ENCODE measurements at regions of chr18 and their contacts with region 1.

Region 1: GRCh38 chr18:35756506-35757117 is 175.1 kb downstream of the GALNT1 start:
- DNase-seq: no peak
- H3K4me3 ChIP-seq: no peak overlapping the region
- H3K27ac ChIP-seq: no peak overlapping the region
- H3K4me1 ChIP-seq: no peaks in the 10 kb centered on the region
- H3K27me3 ChIP-seq: no peaks in the 10 kb centered on the region
- CTCF ChIP-seq: peak; percentile 43 to 74 (median 54)
- EP300 ChIP-seq: no peak
- POLR2A ChIP-seq: no peak

Region 2: DNA sequence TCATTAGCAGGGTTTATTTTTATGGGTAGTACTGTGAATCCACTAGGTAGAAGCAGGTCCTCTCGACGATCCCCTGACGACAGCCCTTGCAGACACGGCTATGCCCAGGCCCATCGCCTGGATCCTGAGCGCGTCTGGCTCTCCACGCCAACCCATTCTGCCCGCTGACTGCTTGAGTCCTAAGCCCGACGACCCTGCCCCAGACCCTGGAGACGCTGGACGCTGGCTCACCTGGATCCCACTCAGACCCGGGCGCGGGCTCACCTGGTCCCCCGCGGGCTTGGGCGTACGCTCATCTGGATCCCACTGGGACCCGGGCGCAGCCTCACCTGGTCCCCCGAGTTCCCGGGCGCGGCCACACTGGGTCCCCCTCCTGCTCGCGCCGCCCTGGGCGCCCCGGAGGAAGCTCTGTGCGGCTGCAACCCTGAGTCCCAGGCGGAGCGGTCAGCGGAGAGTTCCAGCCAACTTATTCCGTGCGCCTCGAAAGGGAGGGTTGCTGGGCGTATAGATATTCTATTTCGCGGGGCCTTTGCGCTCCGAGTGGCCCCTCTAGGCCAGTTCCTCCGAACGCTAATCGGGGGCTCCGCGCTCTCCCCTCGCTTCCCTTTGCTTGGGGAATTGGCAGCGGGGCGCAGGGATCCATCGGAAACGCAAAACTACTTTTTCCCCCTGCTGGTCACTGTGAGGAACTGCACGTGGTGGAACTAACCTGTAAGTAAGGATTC is 193.5 kb after region 1 on chr18:
- intact Hi-C with region 1: loop called (anchors 1 kb)
- DNase-seq: peak; percentile 73
- H3K4me3 ChIP-seq: peak overlapping the region; percentile 31 to 56 (median 48)
- H3K27ac ChIP-seq: peak overlapping the region in 2 of 4 donors; percentile 18 to 68
- H3K4me1 ChIP-seq: peaks cover 0 to 8% (median 5%) of the 10 kb centered on the region in 4 donors
- H3K27me3 ChIP-seq: peaks cover 0 to 3% (median 0%) of the 10 kb centered on the region in 3 donors
- CTCF ChIP-seq: peak; percentile 60 to 95 (median 84)
- EP300 ChIP-seq: no peak
- POLR2A ChIP-seq: no peak

Region 3: DNA sequence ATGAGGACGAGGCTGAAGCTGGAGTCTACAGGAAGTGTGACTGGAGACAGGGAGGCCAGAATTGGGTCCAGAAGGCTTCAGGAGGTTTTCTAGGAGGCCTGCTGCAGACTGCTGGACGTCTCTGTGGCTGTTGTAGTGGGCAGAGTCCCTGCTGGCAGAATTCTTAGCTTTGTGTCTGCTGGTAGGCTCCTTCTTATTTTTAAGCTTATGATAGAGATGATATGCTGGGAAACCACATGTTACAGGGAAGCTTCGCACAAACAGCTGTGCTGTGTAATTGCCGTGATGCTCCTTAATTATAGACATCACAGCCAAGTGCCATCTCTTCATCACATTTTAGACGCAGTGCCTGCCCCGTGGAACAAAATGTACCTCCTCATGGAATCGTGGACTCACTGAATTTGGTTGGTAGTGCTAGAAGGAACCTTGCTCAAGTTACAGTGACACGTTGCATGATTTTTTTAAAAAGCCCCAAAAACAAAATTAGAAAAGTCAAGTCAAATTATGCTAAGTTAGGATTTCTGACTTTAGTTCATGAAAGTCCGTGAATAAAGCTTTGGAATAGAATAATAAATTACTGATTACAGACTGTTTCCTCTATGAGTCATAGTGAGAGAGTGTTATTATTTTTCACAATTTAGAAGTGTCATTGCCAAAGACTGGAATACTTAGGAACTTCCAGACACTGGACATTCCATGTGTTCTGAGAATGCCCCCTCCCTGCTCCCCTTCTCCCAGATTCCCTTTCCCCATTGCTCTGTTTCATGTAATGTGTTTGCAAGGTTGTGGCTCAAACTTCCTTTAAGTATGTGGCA is 685.0 kb after region 1 on chr18:
- intact Hi-C with region 1: no loop called
- DNase-seq: no peak
- H3K4me3 ChIP-seq: no peak overlapping the region
- H3K27ac ChIP-seq: peak overlapping the region; percentile 38 to 79 (median 66)
- H3K4me1 ChIP-seq: peaks cover 0 to 35% (median 17%) of the 10 kb centered on the region in 4 donors
- H3K27me3 ChIP-seq: no peaks in the 10 kb centered on the region
- CTCF ChIP-seq: no peak
- EP300 ChIP-seq: peak in 1 of 4 donors; percentile 9
- POLR2A ChIP-seq: no peak

Measured in sigmoid colon (tissue), 7 donors.